Mammary epithelial cell (primary cell): ENCODE measurements at regions of chr2 and their contacts with region 1.

Region 1: GRCh38 chr2:96305091-96305978 is at the start of gene SNRNP200:
- DNase-seq: peak; percentile 84
- H3K4me3 ChIP-seq: peak within 1 kb of the TSS; percentile 74 to 97 (median 84)
- H3K27ac ChIP-seq: peak within 1 kb of the TSS; percentile 79
- H3K4me1 ChIP-seq: peaks cover 15% of the 10 kb centered on the region
- H3K27me3 ChIP-seq: no peaks in the 10 kb centered on the region
- CTCF ChIP-seq: no peak
- total RNA-seq, gene SNRNP200: 45.5 to 93.8 TPM

Region 2: DNA sequence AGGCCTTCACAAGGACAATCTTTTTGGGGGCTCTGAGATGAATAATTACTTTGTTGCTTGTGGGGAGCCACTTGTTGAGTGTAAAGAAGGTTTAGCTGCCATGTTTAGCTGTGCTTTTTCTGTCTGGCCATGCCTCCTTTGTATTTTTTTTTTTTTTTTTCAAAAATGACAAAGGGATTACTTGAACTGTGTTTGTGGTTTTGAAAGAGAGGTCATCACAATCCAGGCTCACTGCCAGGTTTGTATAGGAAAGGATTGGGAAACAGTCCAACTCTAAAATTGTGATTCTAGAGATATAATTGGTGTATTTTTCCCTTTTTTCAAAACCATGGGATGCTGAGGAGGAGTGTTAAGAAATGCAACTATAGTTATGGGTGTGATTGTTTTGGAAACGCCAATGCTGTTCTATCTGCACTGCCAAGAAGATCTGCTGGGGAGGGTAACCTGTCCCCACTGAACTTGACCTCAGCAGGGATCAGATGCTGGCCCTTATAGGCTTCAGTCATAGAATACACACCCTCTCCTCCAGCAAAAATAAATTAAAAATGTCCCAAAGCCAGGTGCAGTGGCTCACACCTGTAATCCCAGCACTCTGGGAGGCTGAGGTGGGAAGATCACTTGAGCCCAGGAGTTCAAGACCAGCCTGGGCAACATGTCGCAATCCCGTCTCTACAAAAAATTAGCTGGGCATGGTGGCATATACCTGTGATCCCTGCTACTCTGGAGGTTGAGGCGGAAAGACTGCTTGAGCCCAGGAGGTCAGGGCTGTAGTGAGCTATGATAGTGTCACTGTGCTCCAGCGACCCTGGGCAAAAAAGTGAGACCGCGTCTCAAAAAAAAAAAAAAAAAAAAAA is 24.3 kb after region 1 on chr2:
- CTCF ChIA-PET with region 1: no interaction called
- dilution Hi-C with region 1: no loop called
- in situ Hi-C with region 1: no loop called
- intact Hi-C with region 1: loop called (anchors 1 kb)
- DNase-seq: peak; percentile 80
- H3K4me3 ChIP-seq: no peak overlapping the region
- H3K27ac ChIP-seq: no peak overlapping the region
- H3K4me1 ChIP-seq: peaks cover 32% of the 10 kb centered on the region
- H3K27me3 ChIP-seq: peaks cover 3% of the 10 kb centered on the region
- CTCF ChIP-seq: no peak

Region 3: DNA sequence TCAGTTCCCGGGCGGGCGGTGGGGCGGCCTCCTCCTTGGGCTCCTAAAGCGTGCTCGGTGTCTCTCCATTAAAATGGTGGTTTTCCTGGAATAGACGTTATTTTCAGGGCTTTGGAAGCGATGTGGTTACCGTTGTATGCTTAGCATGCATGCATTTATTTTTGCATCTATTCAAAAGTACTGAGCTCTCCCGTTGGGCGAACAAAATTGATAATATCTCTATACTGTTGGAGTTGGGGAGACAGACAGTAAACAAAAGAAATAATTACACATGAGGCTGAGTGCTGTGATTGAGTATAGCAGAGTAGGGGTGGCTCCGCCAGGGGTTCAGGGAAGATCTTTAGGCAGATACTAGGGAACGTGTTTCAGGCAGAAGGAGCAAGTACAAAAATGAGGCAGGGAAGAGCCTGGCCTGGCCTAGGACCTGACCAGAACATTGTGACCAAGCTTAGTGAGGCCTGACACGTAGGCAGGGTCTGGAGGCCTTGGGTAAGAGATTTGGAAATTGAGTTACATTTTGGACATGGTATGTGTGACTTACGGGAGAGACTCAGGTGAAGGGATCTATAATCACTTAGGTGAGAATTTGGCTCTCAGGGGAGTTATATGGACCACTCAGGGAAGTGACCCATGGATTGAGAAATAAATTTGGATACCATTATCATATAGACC is 30.9 kb after region 1 on chr2:
- CTCF ChIA-PET with region 1: no interaction called
- dilution Hi-C with region 1: no loop called
- in situ Hi-C with region 1: no loop called
- intact Hi-C with region 1: loop called (anchors 1 kb)
- DNase-seq: no peak
- H3K4me3 ChIP-seq: peak overlapping the region; percentile 75 to 96 (median 78)
- H3K27ac ChIP-seq: peak overlapping the region; percentile 64
- H3K4me1 ChIP-seq: peaks cover 16% of the 10 kb centered on the region
- H3K27me3 ChIP-seq: no peaks in the 10 kb centered on the region
- CTCF ChIP-seq: no peak